Activated CD4-positive, alpha-beta memory T cell treated with anti-CD3 and anti-CD28 coated beads for 36 hours (primary cell): ENCODE measurements at regions of chr12 and their contacts with region 1.

Region 1: GRCh38 chr12:4763549-4763948 is 43.3 kb downstream of the GALNT8 start:
- DNase-seq: peak; percentile 20
- H3K4me3 Mint-ChIP-seq: no peak overlapping the region
- H3K27ac Mint-ChIP-seq: no peak overlapping the region
- H3K4me1 Mint-ChIP-seq: no peaks in the 10 kb centered on the region
- H3K27me3 Mint-ChIP-seq: no peaks in the 10 kb centered on the region

Region 2: GRCh38 chr12:4356041-4356327 is 407.6 kb before region 1 on chr12:
- CTCF ChIA-PET with region 1: no interaction called
- POLR2A ChIA-PET with region 1: no interaction called
- intact Hi-C with region 1: loop called (anchors 10 kb)
- DNase-seq: peak; percentile 79
- H3K4me3 Mint-ChIP-seq: no peak overlapping the region
- H3K27ac Mint-ChIP-seq: no peak overlapping the region
- H3K4me1 Mint-ChIP-seq: peaks cover 3% of the 10 kb centered on the region
- H3K27me3 Mint-ChIP-seq: no peaks in the 10 kb centered on the region

Region 3: DNA sequence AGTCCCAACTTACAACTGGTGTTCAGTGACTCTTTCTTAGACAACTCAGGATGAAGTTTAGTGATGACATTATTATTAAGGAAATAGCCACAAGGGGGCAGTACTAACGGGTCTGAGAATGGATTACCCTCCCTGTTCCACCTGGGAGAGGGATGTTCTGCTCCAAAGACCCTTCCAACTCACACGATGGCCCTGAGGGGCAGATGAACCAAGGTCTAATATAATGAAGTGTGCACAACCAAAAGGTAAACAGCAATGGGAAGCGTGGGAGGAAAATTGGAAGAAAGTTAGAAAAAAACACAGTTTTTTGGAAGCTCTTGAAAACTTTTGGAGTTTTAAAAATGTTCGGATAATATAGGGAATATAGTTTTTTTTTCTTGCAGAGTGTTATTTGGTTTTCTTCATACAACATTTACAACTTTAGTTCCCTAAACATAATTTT is 341.9 kb before region 1 on chr12:
- CTCF ChIA-PET with region 1: no interaction called
- POLR2A ChIA-PET with region 1: no interaction called
- intact Hi-C with region 1: loop called (anchors 10 kb)
- DNase-seq: no peak
- H3K4me3 Mint-ChIP-seq: no peak overlapping the region
- H3K27ac Mint-ChIP-seq: no peak overlapping the region
- H3K4me1 Mint-ChIP-seq: no peaks in the 10 kb centered on the region
- H3K27me3 Mint-ChIP-seq: peaks cover 8% of the 10 kb centered on the region

Region 4: GRCh38 chr12:4604684-4605193 is 158.8 kb before region 1 on chr12:
- CTCF ChIA-PET with region 1: interaction called, 4 read pairs
- POLR2A ChIA-PET with region 1: no interaction called
- intact Hi-C with region 1: loop called (anchors 1 kb)
- DNase-seq: peak; percentile 88
- H3K4me3 Mint-ChIP-seq: peak overlapping the region; percentile 99
- H3K27ac Mint-ChIP-seq: peak overlapping the region; percentile 88
- H3K4me1 Mint-ChIP-seq: peaks cover 17% of the 10 kb centered on the region
- H3K27me3 Mint-ChIP-seq: peaks cover 15% of the 10 kb centered on the region